PC-9 (cell line): ENCODE measurements at regions of chr21 and their contacts with region 1.

Region 1: DNA sequence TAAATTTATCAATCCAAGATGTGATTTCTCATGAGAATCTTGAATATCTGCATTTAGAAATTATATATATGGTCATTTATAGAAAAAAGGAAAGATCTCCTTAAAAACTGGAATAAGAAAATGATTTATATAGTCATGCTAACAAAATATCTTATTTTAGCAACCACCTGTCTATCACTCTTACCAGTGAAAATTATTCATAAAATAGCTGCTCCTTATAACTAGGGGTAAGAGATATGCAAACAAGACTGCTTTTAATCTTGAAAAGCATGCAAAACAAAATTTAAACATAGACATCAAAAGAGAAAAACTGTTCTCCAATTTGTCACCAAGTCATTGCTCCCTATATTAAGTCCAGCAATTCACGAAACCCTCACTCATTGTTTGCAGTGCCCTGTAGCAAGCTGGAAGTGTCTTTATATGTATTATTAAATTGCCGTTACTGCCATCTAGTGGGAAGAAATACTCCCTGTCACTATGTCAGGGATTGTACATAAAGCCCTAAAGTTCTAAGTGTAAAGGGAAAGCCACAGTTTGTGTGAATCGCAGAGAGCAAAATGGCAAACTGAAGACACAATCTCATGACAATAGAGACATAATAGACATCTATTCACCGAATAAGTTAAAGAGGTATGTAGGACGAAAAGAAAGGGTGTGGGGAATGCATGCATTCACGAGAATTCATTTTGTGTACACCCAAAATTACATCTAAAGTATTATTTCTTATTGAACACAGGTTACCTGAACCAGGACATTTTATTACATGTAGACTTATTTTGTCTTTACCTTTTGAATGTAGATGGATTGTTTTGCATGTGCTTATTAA is 600.5 kb downstream of the USP25 start:
- DNase-seq: peak in 1 of 2 experiments; percentile 1
- H3K4me3 ChIP-seq: no peak overlapping the region
- H3K27ac ChIP-seq: no peak overlapping the region
- H3K4me1 ChIP-seq: no peaks in the 10 kb centered on the region
- H3K27me3 ChIP-seq: no peaks in the 10 kb centered on the region
- CTCF ChIP-seq: peak; percentile 67

Region 2: DNA sequence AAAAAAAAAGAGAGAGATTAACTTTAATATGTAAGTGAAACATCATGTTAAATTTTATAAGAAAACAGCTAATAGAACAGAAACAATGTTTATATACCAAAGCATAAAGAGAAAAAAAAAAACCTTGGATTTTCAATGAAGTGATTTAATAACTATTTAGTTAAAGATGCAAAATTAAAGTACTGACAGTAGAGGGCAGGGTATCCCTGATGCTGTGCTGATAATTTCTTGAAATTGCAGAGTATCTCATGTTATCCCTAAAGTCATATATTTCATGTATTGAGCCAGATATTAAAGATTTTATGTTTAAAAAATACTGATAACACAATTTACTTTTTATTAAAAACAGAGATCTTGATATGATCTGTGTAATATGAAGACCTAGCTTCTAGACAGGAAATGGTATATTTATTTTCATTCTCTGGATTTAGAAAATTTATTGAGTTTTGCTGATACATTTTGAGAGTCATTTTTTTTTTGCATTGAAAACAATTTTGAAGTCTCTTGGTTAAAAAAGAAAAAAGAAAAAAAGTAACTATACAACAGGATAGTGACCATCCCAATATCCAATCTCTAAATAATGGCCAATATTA is 327.3 kb before region 1 on chr21:
- CTCF ChIA-PET with region 1: no interaction called
- POLR2A ChIA-PET with region 1: no interaction called
- intact Hi-C with region 1: loop called (anchors 5 kb)
- DNase-seq: no peak
- H3K4me3 ChIP-seq: no peak overlapping the region
- H3K27ac ChIP-seq: no peak overlapping the region
- H3K4me1 ChIP-seq: no peaks in the 10 kb centered on the region
- H3K27me3 ChIP-seq: no peaks in the 10 kb centered on the region
- CTCF ChIP-seq: peak; percentile 62